Activated T-helper 2 cell treated with anti-CD3 and anti-CD28 coated beads, Interferon-gamma antibody, Interleukin-2, Interleukin-4, amounts not matched to agents 10 μg/mL and 5 μg/mL and 100 μg/mL, durations not matched to agents 14 hours and 24 hours and 36 hours (primary cell): ENCODE measurements at regions of chr21 and their contacts with region 1.

Region 1: GRCh38 chr21:46458315-46459023 is at the start of gene DIP2A:
- DNase-seq: peak; percentile 94
- H3K4me3 Mint-ChIP-seq: peak within 1 kb of the TSS; percentile 94
- H3K27ac Mint-ChIP-seq: peak within 1 kb of the TSS; percentile 93
- H3K4me1 Mint-ChIP-seq: peaks cover 30% of the 10 kb centered on the region
- H3K27me3 Mint-ChIP-seq: no peaks in the 10 kb centered on the region
- total RNA-seq, gene DIP2A: 36.1 and 37.5 TPM in 2 replicates

Region 2: GRCh38 chr21:46323227-46324128 is 135.0 kb before region 1 on chr21 and contains the start of gene C21orf58:
- intact Hi-C with region 1: loop called (anchors 1 kb)
- DNase-seq: peak; percentile 98
- H3K4me3 Mint-ChIP-seq: peak within 1 kb of the TSS; percentile 97
- H3K27ac Mint-ChIP-seq: peak within 1 kb of the TSS; percentile 99
- H3K4me1 Mint-ChIP-seq: peaks cover 30% of the 10 kb centered on the region
- H3K27me3 Mint-ChIP-seq: no peaks in the 10 kb centered on the region
- total RNA-seq, gene C21orf58: 32.2 and 32.8 TPM in 2 replicates

Region 3: GRCh38 chr21:46532080-46532479 is 73.6 kb after region 1 on chr21:
- intact Hi-C with region 1: no loop called
- DNase-seq: no peak
- H3K4me3 Mint-ChIP-seq: no peak overlapping the region
- H3K27ac Mint-ChIP-seq: no peak overlapping the region
- H3K4me1 Mint-ChIP-seq: peaks cover 2% of the 10 kb centered on the region
- H3K27me3 Mint-ChIP-seq: no peaks in the 10 kb centered on the region

Region 4: GRCh38 chr21:46635324-46636172 is 177.1 kb after region 1 on chr21 and contains the start of gene PRMT2:
- intact Hi-C with region 1: loop called (anchors 1 kb)
- DNase-seq: peak; percentile 98
- H3K4me3 Mint-ChIP-seq: peak within 1 kb of the TSS; percentile 93
- H3K27ac Mint-ChIP-seq: peak within 1 kb of the TSS; percentile 97
- H3K4me1 Mint-ChIP-seq: peaks cover 57% of the 10 kb centered on the region
- H3K27me3 Mint-ChIP-seq: peaks cover 7% of the 10 kb centered on the region
- total RNA-seq, gene PRMT2: 71.0 and 73.9 TPM in 2 replicates